ENCODE measurements at regions of chr10 and their contacts with region 1.

Region 1: GRCh38 chr10:133309111-133309719 is 501 bp downstream of the ZNF511 start:
- DNase-seq: peak; percentile 97
- ATAC-seq: peak; percentile 84
- H3K4me3 Mint-ChIP-seq: peak overlapping the region; percentile 100
- H3K27ac Mint-ChIP-seq: peak overlapping the region; percentile 69
- H3K4me1 Mint-ChIP-seq: peaks cover 30% of the 10 kb centered on the region
- H3K27me3 Mint-ChIP-seq: no peaks in the 10 kb centered on the region

Region 2: DNA sequence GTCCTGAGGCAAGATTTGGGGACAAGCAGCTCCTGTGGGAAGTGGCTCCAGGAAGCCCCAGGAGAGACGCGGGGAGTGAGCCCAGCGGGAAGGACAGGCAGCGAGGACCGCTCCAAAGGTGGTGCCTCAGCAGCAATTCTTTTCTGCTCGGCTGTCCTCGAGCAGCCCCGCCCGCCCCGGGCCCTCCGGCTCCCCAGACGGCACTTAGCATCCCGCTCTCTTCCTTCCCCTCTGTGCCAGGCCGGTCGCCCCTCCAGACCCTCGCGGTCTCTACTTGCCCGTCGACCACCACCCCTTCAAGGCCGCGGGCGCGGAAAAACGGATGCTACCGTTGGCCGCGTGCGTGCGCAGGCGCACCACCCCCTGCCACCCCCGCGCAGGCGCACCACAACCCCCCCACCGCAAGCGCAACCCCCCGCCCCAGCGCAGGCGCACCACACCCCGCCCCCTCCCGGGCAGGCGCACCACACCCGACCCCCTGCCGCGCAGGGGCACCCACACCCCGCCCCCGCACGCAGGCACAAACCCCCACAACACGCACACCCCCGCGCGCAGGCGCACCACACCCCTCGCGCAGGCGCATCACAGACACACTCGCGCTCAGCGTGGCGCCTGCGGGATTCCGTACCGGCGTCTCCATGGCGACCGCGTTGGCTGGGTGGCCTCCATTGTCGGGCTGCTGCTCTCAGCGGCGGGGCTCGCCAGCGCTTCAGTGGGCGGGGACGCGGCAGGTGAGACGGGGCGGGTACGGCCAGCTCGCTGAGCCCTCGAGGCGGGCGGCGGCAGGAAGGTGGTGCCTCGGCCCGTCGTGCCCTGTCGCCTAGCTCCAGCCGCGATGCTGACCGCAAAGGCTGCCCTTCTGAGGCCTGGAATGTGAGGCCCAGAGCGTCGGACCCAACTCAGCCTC is 977.4 kb before region 1 on chr10 and contains the start of gene LRRC27:
- CTCF ChIA-PET with region 1: no interaction called
- POLR2A ChIA-PET with region 1: no interaction called
- intact Hi-C with region 1: loop called in 1 of 2 experiments (anchors 5 kb)
- DNase-seq: peak; percentile 99
- ATAC-seq: peak; percentile 86
- H3K4me3 Mint-ChIP-seq: peak within 1 kb of the TSS; percentile 80
- H3K27ac Mint-ChIP-seq: peak within 1 kb of the TSS; percentile 81
- H3K4me1 Mint-ChIP-seq: peaks cover 56% of the 10 kb centered on the region
- H3K27me3 Mint-ChIP-seq: no peaks in the 10 kb centered on the region
- total RNA-seq, gene LRRC27: 3.6 to 4.1 TPM

Region 3: DNA sequence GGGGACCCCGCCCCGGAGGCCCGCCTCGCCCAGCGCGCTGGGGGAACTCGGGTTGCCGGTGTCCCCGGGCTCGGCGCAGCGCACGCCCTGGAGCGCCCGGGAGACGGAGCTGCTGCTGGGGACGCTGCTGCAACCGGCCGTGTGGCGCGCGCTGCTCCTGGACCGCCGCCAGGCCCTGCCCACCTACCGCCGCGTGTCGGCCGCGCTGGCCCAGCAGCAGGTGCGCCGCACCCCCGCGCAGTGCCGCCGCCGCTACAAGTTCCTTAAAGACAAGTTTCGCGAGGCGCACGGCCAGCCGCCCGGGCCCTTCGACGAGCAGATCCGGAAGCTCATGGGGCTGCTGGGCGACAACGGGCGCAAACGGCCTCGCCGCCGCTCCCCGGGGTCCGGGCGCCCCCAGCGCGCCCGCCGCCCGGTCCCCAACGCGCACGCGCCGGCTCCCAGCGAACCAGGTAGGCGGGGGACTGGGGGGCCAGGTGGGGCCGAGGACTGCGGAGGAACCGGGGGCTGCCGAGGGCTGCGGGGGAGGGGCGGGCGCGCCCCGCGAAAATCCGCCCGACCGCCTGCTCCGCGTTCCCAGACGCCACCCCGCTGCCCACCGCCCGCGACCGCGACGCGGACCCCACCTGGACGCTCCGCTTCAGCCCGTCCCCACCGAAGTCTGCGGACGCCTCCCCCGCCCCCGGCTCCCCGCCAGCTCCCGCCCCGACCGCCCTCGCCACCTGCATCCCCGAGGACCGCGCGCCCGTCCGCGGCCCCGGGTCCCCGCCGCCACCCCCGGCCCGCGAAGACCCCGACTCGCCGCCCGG is 78.6 kb before region 1 on chr10:
- CTCF ChIA-PET with region 1: no interaction called
- POLR2A ChIA-PET with region 1: no interaction called
- intact Hi-C with region 1: no loop called
- DNase-seq: peak; percentile 43
- ATAC-seq: no peak
- H3K4me3 Mint-ChIP-seq: no peak overlapping the region
- H3K27ac Mint-ChIP-seq: no peak overlapping the region
- H3K4me1 Mint-ChIP-seq: peaks cover 17% of the 10 kb centered on the region
- H3K27me3 Mint-ChIP-seq: peaks cover 49% of the 10 kb centered on the region

Region 4: GRCh38 chr10:133261726-133262325 is 47.4 kb before region 1 on chr10:
- CTCF ChIA-PET with region 1: interaction called, 9 read pairs
- POLR2A ChIA-PET with region 1: interaction called, 3 read pairs
- intact Hi-C with region 1: loop called (anchors 1 to 5 kb)
- DNase-seq: peak; percentile 93
- ATAC-seq: peak; percentile 30
- H3K4me3 Mint-ChIP-seq: peak overlapping the region; percentile 74
- H3K27ac Mint-ChIP-seq: no peak overlapping the region
- H3K4me1 Mint-ChIP-seq: peaks cover 76% of the 10 kb centered on the region
- H3K27me3 Mint-ChIP-seq: no peaks in the 10 kb centered on the region

Region 5: GRCh38 chr10:133357285-133358151 is 48.3 kb after region 1 on chr10 and contains the start of gene FUOM:
- CTCF ChIA-PET with region 1: interaction called, 4 read pairs
- POLR2A ChIA-PET with region 1: interaction called, 3 read pairs
- intact Hi-C with region 1: loop called (anchors 1 to 5 kb)
- DNase-seq: peak; percentile 87
- ATAC-seq: peak; percentile 92
- H3K4me3 Mint-ChIP-seq: peak within 1 kb of the TSS; percentile 77
- H3K27ac Mint-ChIP-seq: peak within 1 kb of the TSS; percentile 60
- H3K4me1 Mint-ChIP-seq: peaks cover 7% of the 10 kb centered on the region
- H3K27me3 Mint-ChIP-seq: no peaks in the 10 kb centered on the region
- total RNA-seq, gene FUOM: 28.3 to 37.0 TPM

Region 6: DNA sequence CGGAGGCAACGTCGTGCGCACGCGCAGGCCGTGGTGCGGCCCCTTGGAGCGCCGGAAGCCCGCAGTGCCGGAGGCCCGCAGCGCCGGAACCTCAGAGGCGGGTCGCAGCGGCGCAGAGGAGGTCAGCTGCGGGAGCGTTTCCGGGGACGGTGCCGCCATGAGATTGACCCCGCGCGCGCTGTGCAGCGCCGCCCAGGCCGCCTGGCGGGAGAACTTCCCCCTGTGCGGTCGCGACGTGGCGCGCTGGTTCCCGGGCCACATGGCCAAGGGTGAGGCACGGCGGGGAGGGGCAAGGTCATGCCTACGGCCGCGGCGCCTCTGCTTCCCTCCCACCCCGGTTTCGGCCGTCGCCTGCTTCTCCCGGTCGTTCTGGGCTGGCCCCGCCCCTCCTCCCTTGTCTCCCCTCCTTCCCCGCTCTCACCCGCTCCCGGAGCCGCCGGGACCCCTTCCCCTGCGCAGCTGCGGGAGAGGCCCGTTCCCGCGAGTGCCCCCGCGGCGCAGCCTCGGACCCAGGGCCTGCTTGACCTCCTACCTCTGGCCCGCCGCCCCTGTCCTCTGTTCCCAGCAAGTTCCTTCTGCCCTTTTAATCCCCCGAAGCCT is 84.9 kb after region 1 on chr10 and contains the start of gene MTG1:
- CTCF ChIA-PET with region 1: interaction called, 4 read pairs
- POLR2A ChIA-PET with region 1: no interaction called
- intact Hi-C with region 1: loop called in 1 of 2 experiments (anchors 1 kb)
- DNase-seq: peak; percentile 97
- ATAC-seq: peak; percentile 76
- H3K4me3 Mint-ChIP-seq: peak within 1 kb of the TSS; percentile 90
- H3K27ac Mint-ChIP-seq: peak within 1 kb of the TSS; percentile 93
- H3K4me1 Mint-ChIP-seq: peaks cover 51% of the 10 kb centered on the region
- H3K27me3 Mint-ChIP-seq: no peaks in the 10 kb centered on the region
- total RNA-seq, gene MTG1: 46.9 to 52.1 TPM